ENCODE measurements at regions of chr7 and their contacts with region 1.

Region 1: GRCh38 chr7:106285051-106285854 is 470 bp upstream of the NAMPT start:
- DNase-seq: peak; percentile 99
- ATAC-seq: peak; percentile 98

Region 2: GRCh38 chr7:105734233-105734632 is 551.0 kb before region 1 on chr7:
- intact Hi-C with region 1: no loop called
- DNase-seq: no peak
- ATAC-seq: no peak

Region 3: DNA sequence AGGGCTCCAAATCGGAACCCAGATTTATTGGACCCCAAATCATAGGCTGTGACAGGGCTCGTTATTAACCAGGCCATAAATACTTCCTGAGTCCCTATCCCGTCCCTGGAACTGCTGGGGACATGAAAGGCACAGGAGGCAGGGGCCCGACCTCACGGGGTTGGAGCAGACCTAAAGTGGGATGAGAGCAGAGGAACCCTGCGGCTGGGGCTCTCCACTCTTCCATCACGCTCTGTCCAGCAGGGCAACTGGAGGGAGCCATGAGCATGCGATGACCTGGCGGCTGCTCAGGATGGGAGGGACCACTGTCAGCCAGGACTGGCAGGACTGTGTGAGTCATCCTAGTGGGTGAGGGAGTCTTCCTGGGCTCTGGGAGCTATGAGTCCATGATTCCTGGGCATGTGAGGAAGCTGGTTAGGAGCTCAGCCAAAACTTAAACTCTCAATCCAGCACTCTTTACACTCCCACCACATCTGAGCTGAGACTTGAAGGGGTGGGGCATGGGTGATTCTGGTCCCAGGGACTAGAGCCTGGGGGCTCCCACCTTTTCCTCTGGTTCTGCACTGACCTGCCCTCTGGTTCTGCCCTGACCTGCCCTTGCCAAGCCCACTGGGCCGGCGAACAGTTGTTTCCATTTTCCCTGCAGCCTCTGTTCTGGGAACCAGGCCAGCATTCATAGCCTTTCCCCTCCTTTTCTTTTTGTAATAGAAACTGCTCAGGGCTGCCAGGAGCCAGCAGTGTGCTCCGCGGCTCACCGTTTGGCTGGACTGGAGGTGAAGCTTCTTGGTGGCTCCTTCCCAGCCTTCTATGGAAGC is 220.3 kb before region 1 on chr7:
- intact Hi-C with region 1: loop called (anchors 10 kb)
- DNase-seq: peak; percentile 86
- ATAC-seq: peak; percentile 91

Region 4: DNA sequence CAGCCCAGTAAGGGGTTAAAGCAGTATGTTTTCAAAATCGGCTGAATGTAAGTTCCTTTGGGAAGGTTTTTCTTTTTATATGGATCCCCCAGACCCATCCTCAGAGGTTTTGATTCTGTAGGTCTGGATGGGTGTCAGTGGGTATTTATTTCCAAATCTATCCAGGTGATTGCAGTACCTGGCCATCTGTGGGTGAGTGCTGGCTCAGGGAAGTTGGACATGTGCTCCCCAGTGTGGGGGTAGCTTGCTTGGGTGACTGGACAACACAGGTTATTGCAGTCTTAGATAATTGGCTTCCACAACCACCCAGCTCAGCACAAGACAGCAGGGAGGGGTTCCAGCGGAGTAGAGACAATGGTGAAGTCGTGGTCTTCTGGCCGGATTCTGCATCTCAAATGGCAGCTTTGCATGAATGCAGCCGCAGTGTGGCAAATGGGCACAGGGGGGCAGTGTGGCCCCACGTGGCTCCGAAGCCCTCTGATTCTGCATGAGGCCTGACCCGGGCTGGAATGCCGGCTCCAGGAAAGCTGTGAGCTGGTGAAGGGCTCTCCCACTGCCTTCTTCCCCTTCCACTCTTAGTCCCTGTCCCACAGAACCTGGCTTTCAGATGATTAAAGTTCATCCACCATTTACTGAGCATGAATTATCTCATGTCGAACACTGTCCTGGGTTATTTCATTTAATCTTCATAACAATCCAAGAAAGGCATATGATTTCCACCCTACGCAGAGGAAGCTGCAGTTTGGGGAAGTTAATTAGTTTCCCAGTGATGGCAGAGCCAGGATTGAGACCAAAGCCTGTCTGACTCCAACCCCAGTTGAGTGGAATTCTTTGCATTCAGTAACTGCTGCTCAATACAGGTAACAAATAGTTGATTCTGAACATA is 108.6 kb before region 1 on chr7:
- intact Hi-C with region 1: loop called (anchors 2 kb)
- DNase-seq: peak; percentile 90
- ATAC-seq: peak; percentile 83

Region 5: GRCh38 chr7:106216517-106216922 is 68.7 kb before region 1 on chr7:
- intact Hi-C with region 1: loop called (anchors 2 kb)
- DNase-seq: no peak
- ATAC-seq: peak; percentile 80

Region 6: GRCh38 chr7:106371629-106372028 is 86.4 kb after region 1 on chr7:
- intact Hi-C with region 1: loop called (anchors 5 kb)
- DNase-seq: no peak
- ATAC-seq: peak; percentile 30

Region 7: DNA sequence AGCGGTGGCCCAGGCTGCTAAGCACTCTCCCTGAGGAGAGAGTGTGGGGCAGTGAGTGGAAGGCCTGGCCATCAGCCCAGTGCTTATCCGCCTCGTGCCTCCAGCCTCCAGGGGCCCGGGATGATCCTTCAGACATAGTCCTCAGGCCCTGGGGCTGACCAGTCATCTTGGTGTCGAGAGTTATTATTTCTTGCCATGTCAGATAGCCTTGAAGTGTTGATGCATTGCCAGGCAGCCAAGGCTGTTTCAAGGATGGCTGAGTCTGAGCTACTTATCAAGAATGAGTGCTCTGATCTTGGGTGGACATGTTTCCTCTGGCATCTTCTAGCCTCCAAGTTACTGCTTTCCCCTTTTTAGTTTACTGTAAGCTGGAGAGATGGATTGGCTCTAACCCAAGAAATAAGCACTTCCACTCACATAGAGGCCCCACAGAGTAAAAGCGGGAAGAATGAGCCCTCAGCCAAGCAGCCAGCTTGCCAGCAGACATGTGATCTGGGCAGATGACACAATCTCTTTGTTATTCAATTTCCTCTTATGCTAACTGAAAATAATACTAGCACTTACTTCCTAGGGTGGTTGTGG is 136.0 kb after region 1 on chr7:
- intact Hi-C with region 1: loop called (anchors 5 kb)
- DNase-seq: peak; percentile 89
- ATAC-seq: peak; percentile 78

Region 8: GRCh38 chr7:106461993-106462859 is 177.0 kb after region 1 on chr7:
- intact Hi-C with region 1: loop called (anchors 2 kb)
- DNase-seq: no peak
- ATAC-seq: no peak

Measured in Right ventricle myocardium inferior (tissue), 1 donor.